ENCODE measurements at regions of chr17 and their contacts with region 1.

Region 1: GRCh38 chr17:42388381-42389134 is at the start of gene STAT3:
- DNase-seq: peak; percentile 100
- H3K4me3 Mint-ChIP-seq: peak within 1 kb of the TSS; percentile 97
- H3K27ac Mint-ChIP-seq: peak within 1 kb of the TSS; percentile 100
- H3K4me1 Mint-ChIP-seq: peaks cover 47% of the 10 kb centered on the region
- H3K27me3 Mint-ChIP-seq: no peaks in the 10 kb centered on the region
- total RNA-seq, gene STAT3: 404 to 408 TPM

Region 2: GRCh38 chr17:41688699-41689496 is 699.7 kb before region 1 on chr17 and contains the start of gene EIF1:
- CTCF ChIA-PET with region 1: no interaction called
- intact Hi-C with region 1: loop called (anchors 2 kb)
- DNase-seq: peak; percentile 100
- H3K4me3 Mint-ChIP-seq: peak within 1 kb of the TSS; percentile 97
- H3K27ac Mint-ChIP-seq: peak within 1 kb of the TSS; percentile 99
- H3K4me1 Mint-ChIP-seq: peaks cover 26% of the 10 kb centered on the region
- H3K27me3 Mint-ChIP-seq: no peaks in the 10 kb centered on the region
- total RNA-seq, gene EIF1: 1,206 to 1,253 TPM

Region 3: DNA sequence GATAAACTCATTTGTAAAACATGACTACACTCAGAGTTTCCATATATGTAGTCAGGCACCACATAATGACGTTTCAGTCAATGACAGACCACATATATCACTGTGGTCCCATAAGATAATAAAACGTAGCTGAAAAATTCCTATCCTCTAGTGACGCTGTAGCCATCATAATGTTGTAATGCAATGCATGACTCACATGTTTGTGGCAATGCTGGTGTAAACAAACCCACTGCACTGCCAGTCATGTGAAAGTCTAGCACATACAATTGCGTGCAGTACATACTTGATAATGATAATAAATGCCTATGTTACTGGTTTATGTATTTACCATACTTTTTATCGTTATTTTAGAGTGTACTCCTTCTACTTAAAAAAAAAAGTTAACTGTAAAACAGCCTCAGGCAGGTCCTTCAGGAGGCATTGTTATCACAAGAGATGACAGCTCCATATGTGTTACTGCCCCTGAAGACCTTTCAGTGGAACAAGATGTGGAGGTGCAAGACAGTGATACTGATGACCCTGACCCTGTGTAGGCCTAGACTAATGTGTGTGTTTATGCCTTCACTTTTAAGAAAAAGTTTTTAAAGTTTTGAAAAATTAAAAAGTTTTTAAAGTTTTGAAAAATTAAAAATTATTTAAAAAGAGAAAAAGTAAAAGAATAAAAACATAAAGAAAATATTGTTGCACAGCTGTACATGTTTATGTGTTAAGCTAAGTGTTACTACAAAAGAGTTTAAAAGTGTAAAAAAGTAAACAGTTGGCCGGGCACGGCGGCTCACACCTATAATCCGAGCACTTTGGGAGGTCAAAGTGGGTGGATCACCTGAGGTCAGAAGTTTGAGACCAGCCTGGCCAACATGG is 121.4 kb before region 1 on chr17:
- CTCF ChIA-PET with region 1: no interaction called
- intact Hi-C with region 1: loop called (anchors 1 kb)
- DNase-seq: peak; percentile 70
- H3K4me3 Mint-ChIP-seq: peak overlapping the region; percentile 38
- H3K27ac Mint-ChIP-seq: peak overlapping the region; percentile 97
- H3K4me1 Mint-ChIP-seq: peaks cover 68% of the 10 kb centered on the region
- H3K27me3 Mint-ChIP-seq: no peaks in the 10 kb centered on the region

Region 4: GRCh38 chr17:42287926-42288802 is 100.4 kb before region 1 on chr17 and contains the start of gene STAT5A:
- CTCF ChIA-PET with region 1: no interaction called
- intact Hi-C with region 1: no loop called
- DNase-seq: peak; percentile 88
- H3K4me3 Mint-ChIP-seq: peak within 1 kb of the TSS; percentile 86
- H3K27ac Mint-ChIP-seq: peak within 1 kb of the TSS; percentile 95
- H3K4me1 Mint-ChIP-seq: peaks cover 68% of the 10 kb centered on the region
- H3K27me3 Mint-ChIP-seq: no peaks in the 10 kb centered on the region
- total RNA-seq, gene STAT5A: 165 to 174 TPM

Region 5: GRCh38 chr17:42303694-42304093 is 84.9 kb before region 1 on chr17:
- CTCF ChIA-PET with region 1: no interaction called
- intact Hi-C with region 1: no loop called
- DNase-seq: no peak
- H3K4me3 Mint-ChIP-seq: no peak overlapping the region
- H3K27ac Mint-ChIP-seq: peak overlapping the region; percentile 16
- H3K4me1 Mint-ChIP-seq: peaks cover 41% of the 10 kb centered on the region
- H3K27me3 Mint-ChIP-seq: no peaks in the 10 kb centered on the region

Region 6: GRCh38 chr17:42322382-42323267 is 65.9 kb before region 1 on chr17:
- CTCF ChIA-PET with region 1: interaction called, 35 read pairs
- intact Hi-C with region 1: loop called (anchors 1 kb)
- DNase-seq: peak; percentile 99
- H3K4me3 Mint-ChIP-seq: peak overlapping the region; percentile 9
- H3K27ac Mint-ChIP-seq: peak overlapping the region; percentile 81
- H3K4me1 Mint-ChIP-seq: peaks cover 55% of the 10 kb centered on the region
- H3K27me3 Mint-ChIP-seq: no peaks in the 10 kb centered on the region

Region 7: DNA sequence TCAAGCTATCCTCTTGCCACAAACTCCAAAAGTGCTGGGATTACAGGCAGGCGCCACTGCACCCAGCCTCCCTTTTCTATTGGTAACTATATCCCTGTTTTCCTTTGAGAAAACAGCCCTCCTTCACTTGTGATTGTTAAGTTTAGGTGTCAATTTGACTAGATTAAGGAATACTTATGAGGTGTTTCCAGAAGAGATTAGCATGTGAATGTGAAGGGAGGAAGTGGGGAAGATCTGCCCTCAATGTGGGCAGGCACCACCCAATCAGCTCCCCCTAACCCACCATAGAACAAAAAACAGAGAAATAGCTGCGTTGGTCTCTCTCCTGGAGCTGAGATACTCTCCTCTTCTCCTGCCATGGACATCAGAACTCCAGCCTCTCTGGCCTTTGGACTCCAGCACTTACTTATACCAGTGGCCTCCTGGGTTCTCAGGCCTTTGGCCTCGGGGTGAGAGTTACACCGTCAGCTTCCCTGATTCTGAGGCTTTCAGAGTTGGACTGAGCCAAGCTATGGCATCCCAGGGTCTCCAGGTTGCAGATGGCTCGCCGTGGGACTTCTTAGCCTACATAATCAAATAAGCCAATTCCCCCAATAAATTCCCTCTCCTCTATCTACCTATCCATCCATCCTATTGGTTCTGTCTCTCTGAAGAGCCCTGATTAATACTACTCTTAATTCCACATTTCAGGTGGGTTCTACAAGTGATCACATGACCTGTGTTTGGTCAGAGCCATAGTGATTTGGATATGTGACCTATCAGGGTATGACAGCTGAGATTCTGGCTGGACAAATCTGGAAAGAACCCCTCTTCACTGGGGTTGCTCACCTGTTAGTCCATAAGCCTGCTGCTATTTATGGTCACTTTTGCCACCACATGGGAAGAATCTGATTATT is 11.6 kb after region 1 on chr17:
- CTCF ChIA-PET with region 1: interaction called, 59 read pairs
- intact Hi-C with region 1: loop called (anchors 1 kb)
- DNase-seq: no peak
- H3K4me3 Mint-ChIP-seq: no peak overlapping the region
- H3K27ac Mint-ChIP-seq: no peak overlapping the region
- H3K4me1 Mint-ChIP-seq: peaks cover 29% of the 10 kb centered on the region
- H3K27me3 Mint-ChIP-seq: no peaks in the 10 kb centered on the region

Region 8: DNA sequence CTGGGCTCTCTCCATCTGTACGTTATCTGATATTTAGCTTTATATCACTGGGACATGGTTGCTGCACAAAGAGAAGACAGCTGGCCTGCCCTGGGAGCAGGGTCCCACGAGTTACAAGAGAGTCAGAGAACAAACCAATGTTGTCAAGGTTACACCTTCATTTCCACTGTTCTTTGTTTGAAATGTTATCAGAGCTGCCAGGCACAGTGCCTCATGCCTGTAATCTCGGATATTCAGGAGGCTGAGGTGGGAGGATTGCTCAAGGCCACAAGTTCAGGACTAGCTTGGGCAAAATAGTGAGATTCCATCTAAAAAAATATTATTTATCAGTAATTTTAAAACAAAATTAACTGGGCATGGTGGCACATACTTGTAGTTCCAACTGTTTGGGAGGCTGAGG is 104.8 kb after region 1 on chr17:
- CTCF ChIA-PET with region 1: no interaction called
- intact Hi-C with region 1: no loop called
- DNase-seq: no peak
- H3K4me3 Mint-ChIP-seq: no peak overlapping the region
- H3K27ac Mint-ChIP-seq: no peak overlapping the region
- H3K4me1 Mint-ChIP-seq: peaks cover 2% of the 10 kb centered on the region
- H3K27me3 Mint-ChIP-seq: no peaks in the 10 kb centered on the region

Measured in activated naive CD4-positive, alpha-beta T cell treated with anti-CD3 and anti-CD28 coated beads for 36 hours (primary cell).